ENCODE measurements at regions of chr18 and their contacts with region 1.

Region 1: GRCh38 chr18:1585879-1586488 is 681.3 kb downstream of the ADCYAP1 start:
- DNase-seq: no peak
- ATAC-seq: peak in 2 of 4 donors; percentile 51 to 58
- H3K4me3 ChIP-seq: no peak overlapping the region
- H3K27ac ChIP-seq: no peak overlapping the region
- H3K4me1 ChIP-seq: peaks cover 0 to 4% (median 0%) of the 10 kb centered on the region in 12 donors
- H3K27me3 ChIP-seq: peaks cover 0 to 10% (median 0%) of the 10 kb centered on the region in 9 donors
- CTCF ChIP-seq: peak; percentile 26 to 66 (median 51)
- POLR2A ChIP-seq: no peak

Region 2: GRCh38 chr18:2083691-2084090 is 497.7 kb after region 1 on chr18:
- intact Hi-C with region 1: loop called in 2 of 10 experiments (anchors 10 kb)
- DNase-seq: no peak
- ATAC-seq: no peak
- H3K4me3 ChIP-seq: no peak overlapping the region
- H3K27ac ChIP-seq: no peak overlapping the region
- H3K4me1 ChIP-seq: peaks cover 0 to 8% (median 0%) of the 10 kb centered on the region in 12 donors
- H3K27me3 ChIP-seq: no peaks in the 10 kb centered on the region
- CTCF ChIP-seq: peak in 6 of 12 donors; percentile 11 to 31 (median 19)
- POLR2A ChIP-seq: no peak

Region 3: DNA sequence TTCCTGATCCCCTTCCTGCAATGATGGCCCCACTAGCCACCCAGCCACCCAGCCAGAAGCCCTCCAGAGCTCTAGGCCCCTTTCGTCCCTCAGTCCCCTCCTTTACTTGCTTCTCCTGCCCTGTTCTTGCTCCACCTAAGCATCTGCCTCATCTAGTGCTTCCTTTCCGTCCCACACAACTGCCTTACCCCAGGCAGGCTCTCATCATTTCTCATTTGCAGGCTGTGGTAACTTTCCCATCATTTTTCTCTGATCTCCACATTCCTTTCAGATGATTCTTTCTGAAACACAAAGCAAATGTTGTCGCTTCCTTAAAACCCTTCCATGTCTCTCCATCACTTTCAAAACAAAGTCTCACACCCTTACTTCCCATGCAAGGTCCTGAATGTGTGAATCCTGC is 525.5 kb after region 1 on chr18:
- intact Hi-C with region 1: loop called in 1 of 10 experiments (anchors 10 kb)
- DNase-seq: no peak
- ATAC-seq: no peak
- H3K4me3 ChIP-seq: no peak overlapping the region
- H3K27ac ChIP-seq: no peak overlapping the region
- H3K4me1 ChIP-seq: no peaks in the 10 kb centered on the region
- H3K27me3 ChIP-seq: no peaks in the 10 kb centered on the region
- CTCF ChIP-seq: no peak
- POLR2A ChIP-seq: no peak

Region 4: GRCh38 chr18:2223849-2224248 is 637.9 kb after region 1 on chr18:
- intact Hi-C with region 1: loop called in 9 of 10 experiments (anchors 2 to 10 kb)
- DNase-seq: peak in 1 of 5 donors; percentile 26
- ATAC-seq: peak in 3 of 4 donors; percentile 45 to 70 (median 46)
- H3K4me3 ChIP-seq: peak overlapping the region in 9 of 12 donors; percentile 16 to 43 (median 24)
- H3K27ac ChIP-seq: no peak overlapping the region
- H3K4me1 ChIP-seq: no peaks in the 10 kb centered on the region
- H3K27me3 ChIP-seq: peaks cover 0 to 4% (median 0%) of the 10 kb centered on the region in 9 donors
- CTCF ChIP-seq: peak; percentile 32 to 68 (median 53)
- POLR2A ChIP-seq: no peak

Region 5: DNA sequence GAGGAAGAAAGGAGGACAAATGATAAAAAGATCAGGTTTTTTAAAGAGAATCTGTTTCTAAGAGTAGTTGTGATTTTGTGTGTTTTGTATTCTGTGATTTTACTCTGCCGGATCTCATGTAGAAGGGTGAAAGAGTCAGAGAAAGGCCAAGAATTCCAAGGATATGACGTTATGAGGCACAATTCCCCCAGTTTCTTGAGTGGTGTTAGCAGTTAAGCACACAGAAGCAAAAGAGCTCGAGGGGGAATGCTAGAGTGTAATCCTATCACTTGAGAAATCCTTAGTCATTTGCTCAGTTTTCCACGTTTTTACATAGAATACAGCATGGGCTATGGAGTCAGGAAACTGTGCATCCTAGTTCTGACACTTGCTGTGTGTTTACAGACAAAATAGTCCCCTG is 950.5 kb after region 1 on chr18:
- intact Hi-C with region 1: loop called in 6 of 10 experiments (anchors 5 to 10 kb)
- DNase-seq: no peak
- ATAC-seq: peak in 1 of 4 donors; percentile 32
- H3K4me3 ChIP-seq: no peak overlapping the region
- H3K27ac ChIP-seq: no peak overlapping the region
- H3K4me1 ChIP-seq: no peaks in the 10 kb centered on the region
- H3K27me3 ChIP-seq: no peaks in the 10 kb centered on the region
- CTCF ChIP-seq: no peak
- POLR2A ChIP-seq: no peak

Region 6: DNA sequence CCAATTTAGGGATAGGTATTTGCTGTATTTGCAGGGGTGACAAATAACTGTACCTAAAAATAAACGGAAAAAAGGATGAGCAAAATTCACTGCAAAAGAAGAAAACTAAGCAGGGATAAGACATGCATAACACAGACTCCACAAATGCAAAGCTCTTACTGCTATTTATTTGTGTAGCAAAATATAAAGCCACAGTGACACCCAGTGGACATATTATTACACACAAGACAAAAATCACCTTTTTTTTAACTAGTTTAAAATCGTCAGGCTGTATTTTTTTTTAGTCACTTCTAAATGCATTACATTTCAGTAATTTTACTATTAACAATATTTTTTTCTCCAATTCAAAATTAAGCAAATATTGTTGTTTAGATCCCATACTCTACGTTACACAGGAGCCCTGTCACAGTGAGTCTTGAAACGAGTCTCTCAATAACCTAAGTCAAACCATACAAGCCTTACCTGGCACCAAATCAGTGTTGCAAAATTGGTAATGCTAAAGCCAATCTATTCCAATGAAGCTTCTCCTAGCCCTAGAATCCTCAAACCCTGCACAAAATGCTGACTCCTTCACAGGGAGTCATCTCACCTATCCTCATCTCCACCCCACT is 961.6 kb after region 1 on chr18:
- intact Hi-C with region 1: loop called in 9 of 10 experiments (anchors 5 to 10 kb)
- DNase-seq: no peak
- ATAC-seq: no peak
- H3K4me3 ChIP-seq: no peak overlapping the region
- H3K27ac ChIP-seq: no peak overlapping the region
- H3K4me1 ChIP-seq: no peaks in the 10 kb centered on the region
- H3K27me3 ChIP-seq: no peaks in the 10 kb centered on the region
- CTCF ChIP-seq: peak; percentile 38 to 71 (median 53)
- POLR2A ChIP-seq: no peak

Measured in heart left ventricle (tissue), 16 donors.